ENCODE measurements at regions of chr9 and their contacts with region 1.

Region 1: GRCh38 chr9:110048403-110048975 is 159.5 kb downstream of the C9orf152 start:
- DNase-seq: peak; percentile 91
- ATAC-seq: peak; percentile 96

Region 2: GRCh38 chr9:109689701-109690100 is 358.8 kb before region 1 on chr9:
- intact Hi-C with region 1: no loop called
- DNase-seq: no peak
- ATAC-seq: no peak

Region 3: DNA sequence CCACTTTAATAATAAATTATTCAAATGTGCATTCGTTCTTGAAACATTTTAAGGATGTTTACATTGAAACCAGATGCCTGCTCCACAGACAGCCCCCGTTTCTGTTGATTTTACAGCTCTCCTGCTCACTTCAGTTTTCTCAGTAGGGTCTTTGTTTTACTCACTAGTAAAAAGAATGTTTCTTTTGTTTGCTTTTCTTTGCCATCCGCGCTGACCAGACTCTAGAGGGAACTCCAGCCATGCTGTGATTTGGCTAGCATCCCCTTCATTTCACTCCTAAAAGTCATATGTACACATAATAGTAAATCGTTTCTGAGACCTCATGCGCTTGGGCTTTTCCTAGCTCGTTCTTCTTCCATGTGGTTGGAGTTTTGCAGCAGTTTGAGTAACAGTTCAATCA is 297.2 kb before region 1 on chr9:
- intact Hi-C with region 1: no loop called
- DNase-seq: no peak
- ATAC-seq: no peak

Region 4: GRCh38 chr9:109903515-109904138 is 144.9 kb before region 1 on chr9:
- intact Hi-C with region 1: loop called (anchors 2 kb)
- DNase-seq: no peak
- ATAC-seq: peak; percentile 56

Region 5: DNA sequence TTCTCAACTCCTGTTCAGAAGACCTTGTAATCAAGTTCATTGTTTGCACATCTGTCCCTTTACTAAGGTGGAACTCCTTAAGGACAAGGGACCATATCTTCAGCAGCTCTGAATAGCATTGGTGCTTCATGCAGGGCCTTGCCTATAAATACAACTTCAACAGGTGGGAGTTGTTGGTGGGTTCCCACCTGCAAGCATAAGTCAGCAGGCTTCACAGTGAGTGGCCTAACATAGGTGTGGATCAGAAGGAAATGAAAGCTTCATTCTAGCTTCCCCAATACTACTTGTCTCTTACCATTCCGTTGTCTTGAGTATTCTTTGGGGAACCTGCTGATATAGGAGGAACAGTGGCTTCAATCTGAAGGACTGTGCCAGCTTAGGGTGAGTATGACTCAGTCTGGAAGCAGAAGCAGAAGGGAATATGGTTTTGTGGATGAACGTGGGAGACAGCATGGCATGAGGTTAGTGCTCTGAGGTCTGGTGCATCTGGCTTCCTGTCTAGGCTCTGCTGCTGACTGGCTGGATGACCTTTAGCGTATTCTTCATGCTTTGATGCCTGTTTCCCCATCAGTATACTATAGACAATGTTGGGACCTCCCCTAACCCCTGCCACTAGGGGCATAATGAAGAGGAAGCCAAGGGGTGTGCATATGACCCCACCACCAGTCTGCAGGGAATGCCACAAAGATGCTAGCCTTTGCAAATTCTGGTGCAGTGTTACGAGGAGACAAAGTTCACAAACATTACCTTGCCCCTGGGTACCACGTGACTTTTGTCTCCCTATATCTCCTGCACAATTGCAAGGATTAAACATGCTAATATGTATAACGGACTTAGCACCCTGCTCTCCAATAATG is 76.2 kb before region 1 on chr9:
- intact Hi-C with region 1: loop called (anchors 5 kb)
- DNase-seq: no peak
- ATAC-seq: peak; percentile 48